SK-N-SH (cell line): ENCODE measurements at regions of chr5 and their contacts with region 1.

Region 1: GRCh38 chr5:96065577-96066385 is 104.1 kb upstream of the ELL2 start:
- DNase-seq: no peak
- H3K4me3 ChIP-seq: no peak overlapping the region
- H3K27ac ChIP-seq: peak overlapping the region; percentile 83 to 94
- H3K4me1 ChIP-seq: peaks cover 2 to 29% of the 10 kb centered on the region in 2 experiments; a peak in 3 of 4 replicates
- H3K27me3 ChIP-seq: no peaks in the 10 kb centered on the region
- CTCF ChIP-seq: no peak
- EP300 ChIP-seq: no peak
- RAD21 ChIP-seq: no peak

Region 2: DNA sequence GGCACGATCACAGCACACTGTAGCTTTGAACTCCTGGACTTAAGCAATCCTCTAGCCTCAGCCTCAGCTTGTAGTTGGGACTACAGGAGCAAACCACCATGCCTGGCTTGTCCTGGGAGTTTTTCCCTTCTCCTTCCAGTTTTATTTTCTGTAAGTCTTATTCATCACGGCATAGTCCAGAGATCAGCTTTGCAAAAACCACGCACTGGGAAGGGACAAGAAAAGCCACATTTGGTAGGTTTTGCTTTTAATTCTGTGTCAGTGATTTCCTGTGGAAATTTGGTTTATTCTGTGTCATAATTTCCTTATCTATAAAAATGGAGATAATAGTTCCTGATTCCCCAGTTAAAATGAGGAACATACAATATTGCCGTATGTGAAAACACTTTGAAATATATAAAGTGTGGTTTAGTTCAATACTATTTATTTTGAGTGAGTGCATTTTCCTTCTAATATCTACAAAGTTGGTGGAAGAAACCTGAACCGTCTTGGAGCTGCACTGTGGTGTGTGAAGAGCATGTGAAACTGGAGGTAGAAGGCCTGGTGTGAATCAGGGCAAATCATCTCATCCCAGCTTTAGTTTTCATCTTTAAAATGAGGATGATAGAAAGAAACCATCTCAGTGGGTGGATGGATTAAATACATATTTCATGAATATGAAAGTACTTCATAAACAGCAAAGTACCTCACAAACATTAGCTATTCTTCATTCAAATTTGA is 11.3 kb before region 1 on chr5:
- CTCF ChIA-PET with region 1: interaction called, 10 read pairs
- POLR2A ChIA-PET with region 1: no interaction called
- DNase-seq: no peak
- H3K4me3 ChIP-seq: no peak overlapping the region
- H3K27ac ChIP-seq: no peak overlapping the region
- H3K4me1 ChIP-seq: peaks cover 0 to 12% of the 10 kb centered on the region in 2 experiments; a peak in 2 of 4 replicates
- H3K27me3 ChIP-seq: no peaks in the 10 kb centered on the region
- CTCF ChIP-seq: no peak
- EP300 ChIP-seq: no peak
- RAD21 ChIP-seq: no peak